ENCODE measurements at regions of chr10 and their contacts with region 1.

Region 1: GRCh38 chr10:43348511-43349312 is 22.7 kb upstream of the FXYD4 start:
- DNase-seq: peak; percentile 75 to 95
- ATAC-seq: peak; percentile 98 to 100 (median 100)
- H3K4me3 ChIP-seq: no peak overlapping the region
- H3K4me3 Mint-ChIP-seq: peak overlapping the region; percentile 8
- H3K27ac ChIP-seq: no peak overlapping the region
- H3K27ac Mint-ChIP-seq: no peak overlapping the region
- H3K4me1 ChIP-seq: peaks cover 15% of the 10 kb centered on the region
- H3K4me1 Mint-ChIP-seq: peaks cover 13% of the 10 kb centered on the region in 2 donors
- H3K27me3 ChIP-seq: peaks cover 13% of the 10 kb centered on the region
- H3K27me3 Mint-ChIP-seq: peaks cover 8 to 19% of the 10 kb centered on the region in 2 donors
- CTCF ChIP-seq: peak; percentile 91

Region 2: GRCh38 chr10:42744134-42744692 is 604.5 kb before region 1 on chr10:
- intact Hi-C with region 1: loop called (anchors 10 kb)
- DNase-seq: no peak
- ATAC-seq: no peak
- H3K4me3 ChIP-seq: no peak overlapping the region
- H3K4me3 Mint-ChIP-seq: no peak overlapping the region
- H3K27ac ChIP-seq: no peak overlapping the region
- H3K27ac Mint-ChIP-seq: no peak overlapping the region
- H3K4me1 ChIP-seq: no peaks in the 10 kb centered on the region
- H3K4me1 Mint-ChIP-seq: no peaks in the 10 kb centered on the region
- H3K27me3 ChIP-seq: no peaks in the 10 kb centered on the region
- H3K27me3 Mint-ChIP-seq: peaks cover 0 to 9% of the 10 kb centered on the region in 2 donors
- CTCF ChIP-seq: no peak

Region 3: GRCh38 chr10:42866115-42866995 is 482.4 kb before region 1 on chr10:
- intact Hi-C with region 1: loop called (anchors 2 kb)
- DNase-seq: peak; percentile 31 to 71
- ATAC-seq: peak; percentile 68 to 84 (median 75)
- H3K4me3 ChIP-seq: no peak overlapping the region
- H3K4me3 Mint-ChIP-seq: no peak overlapping the region
- H3K27ac ChIP-seq: no peak overlapping the region
- H3K27ac Mint-ChIP-seq: no peak overlapping the region
- H3K4me1 ChIP-seq: peaks cover 10% of the 10 kb centered on the region
- H3K4me1 Mint-ChIP-seq: no peaks in the 10 kb centered on the region
- H3K27me3 ChIP-seq: peaks cover 2% of the 10 kb centered on the region
- H3K27me3 Mint-ChIP-seq: peaks cover 27 to 47% of the 10 kb centered on the region in 2 donors
- CTCF ChIP-seq: peak; percentile 39

Region 4: DNA sequence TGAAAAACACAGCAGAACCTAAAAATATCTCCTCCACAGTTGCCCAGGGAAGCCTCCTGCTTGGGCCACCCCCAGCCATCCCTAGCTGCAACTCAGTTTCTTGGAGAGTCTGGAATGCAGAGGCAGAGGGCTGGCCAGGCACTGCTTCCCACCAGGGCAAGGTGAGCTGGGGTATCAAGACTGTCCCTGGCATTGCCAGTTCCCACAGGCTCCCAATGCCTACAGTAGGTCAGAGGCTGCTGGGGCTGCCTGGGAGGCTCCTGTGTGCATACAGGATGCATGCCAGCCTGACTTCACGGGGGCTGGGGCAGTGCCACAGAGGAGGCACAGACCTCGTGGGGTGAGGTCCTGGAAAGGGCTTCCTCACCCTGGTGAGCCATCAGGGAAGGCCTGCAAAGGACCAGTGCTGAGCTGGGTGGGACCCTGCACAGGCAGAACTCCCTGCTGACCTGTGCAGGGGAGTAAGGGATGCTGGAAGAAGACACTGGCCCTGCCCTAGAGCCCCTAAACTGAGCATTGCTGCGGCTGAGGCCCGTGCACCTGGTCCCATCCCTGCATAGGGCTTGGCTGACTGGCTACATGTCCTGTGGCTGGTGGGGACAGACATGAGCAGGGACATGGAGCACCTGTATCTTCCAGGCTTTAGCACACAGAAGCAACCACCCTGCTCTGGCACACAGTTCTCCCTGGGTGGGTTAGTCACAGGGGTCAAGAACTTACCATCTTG is 393.8 kb before region 1 on chr10:
- intact Hi-C with region 1: loop called (anchors 5 kb)
- DNase-seq: no peak
- ATAC-seq: no peak
- H3K4me3 ChIP-seq: no peak overlapping the region
- H3K4me3 Mint-ChIP-seq: no peak overlapping the region
- H3K27ac ChIP-seq: no peak overlapping the region
- H3K27ac Mint-ChIP-seq: no peak overlapping the region
- H3K4me1 ChIP-seq: no peaks in the 10 kb centered on the region
- H3K4me1 Mint-ChIP-seq: no peaks in the 10 kb centered on the region
- H3K27me3 ChIP-seq: no peaks in the 10 kb centered on the region
- H3K27me3 Mint-ChIP-seq: peaks cover 6 to 9% of the 10 kb centered on the region in 2 donors
- CTCF ChIP-seq: no peak

Region 5: DNA sequence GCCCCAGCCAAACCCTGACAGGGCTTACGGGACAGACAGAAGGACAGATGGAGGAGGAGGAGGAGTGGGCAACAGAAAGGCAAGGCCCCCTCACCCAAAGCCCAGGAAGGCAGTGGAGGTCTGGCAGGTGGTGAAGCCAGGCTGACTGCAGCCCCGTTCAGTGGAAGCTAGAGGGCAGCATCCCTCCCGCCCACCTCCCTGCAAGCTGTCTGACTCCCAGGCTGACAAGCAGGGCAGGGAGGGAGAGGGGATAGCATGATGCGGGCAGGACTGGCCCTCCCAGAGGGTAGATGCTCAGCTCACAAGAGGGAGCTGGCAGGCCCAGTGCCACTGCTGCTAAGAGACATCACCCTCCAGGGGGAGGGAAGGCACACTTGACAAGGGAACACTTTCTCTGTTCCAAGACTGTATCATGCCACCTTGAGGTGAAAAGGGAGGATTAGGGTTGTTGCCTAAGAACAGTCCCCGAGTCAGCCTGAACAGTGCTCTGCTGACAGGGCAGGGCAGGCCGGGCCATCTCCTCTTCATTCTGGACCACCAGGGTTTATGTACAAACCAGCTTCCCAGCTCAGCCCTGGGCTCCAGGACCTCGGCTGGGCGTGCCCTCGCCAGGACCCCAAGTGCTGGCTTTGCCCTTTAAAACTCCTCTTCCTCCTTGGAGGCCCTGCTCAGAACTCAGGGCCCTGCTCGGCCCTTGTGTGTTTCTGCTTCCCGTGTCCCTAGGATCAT is 143.6 kb before region 1 on chr10:
- intact Hi-C with region 1: loop called (anchors 10 kb)
- DNase-seq: peak; percentile 19 to 75
- ATAC-seq: peak; percentile 45 to 55 (median 54)
- H3K4me3 ChIP-seq: no peak overlapping the region
- H3K4me3 Mint-ChIP-seq: no peak overlapping the region
- H3K27ac ChIP-seq: no peak overlapping the region
- H3K27ac Mint-ChIP-seq: peak overlapping the region in 1 of 2 donors; percentile 66
- H3K4me1 ChIP-seq: peaks cover 43% of the 10 kb centered on the region
- H3K4me1 Mint-ChIP-seq: peaks cover 6 to 17% of the 10 kb centered on the region in 2 donors
- H3K27me3 ChIP-seq: no peaks in the 10 kb centered on the region
- H3K27me3 Mint-ChIP-seq: no peaks in the 10 kb centered on the region
- CTCF ChIP-seq: peak; percentile 78

Region 6: GRCh38 chr10:43273543-43273942 is 75.2 kb before region 1 on chr10:
- intact Hi-C with region 1: no loop called
- DNase-seq: no peak
- ATAC-seq: no peak
- H3K4me3 ChIP-seq: no peak overlapping the region
- H3K4me3 Mint-ChIP-seq: no peak overlapping the region
- H3K27ac ChIP-seq: no peak overlapping the region
- H3K27ac Mint-ChIP-seq: no peak overlapping the region
- H3K4me1 ChIP-seq: no peaks in the 10 kb centered on the region
- H3K4me1 Mint-ChIP-seq: no peaks in the 10 kb centered on the region
- H3K27me3 ChIP-seq: peaks cover 9% of the 10 kb centered on the region
- H3K27me3 Mint-ChIP-seq: peaks cover 38 to 63% of the 10 kb centered on the region in 2 donors
- CTCF ChIP-seq: no peak

Region 7: GRCh38 chr10:43292755-43293676 is 55.7 kb before region 1 on chr10:
- intact Hi-C with region 1: loop called (anchors 5 kb)
- DNase-seq: peak in 1 of 2 donors; percentile 75
- ATAC-seq: peak; percentile 66 to 83 (median 73)
- H3K4me3 ChIP-seq: no peak overlapping the region
- H3K4me3 Mint-ChIP-seq: no peak overlapping the region
- H3K27ac ChIP-seq: peak overlapping the region; percentile 51
- H3K27ac Mint-ChIP-seq: peak overlapping the region in 1 of 2 donors; percentile 14
- H3K4me1 ChIP-seq: peaks cover 33% of the 10 kb centered on the region
- H3K4me1 Mint-ChIP-seq: peaks cover 11 to 22% of the 10 kb centered on the region in 2 donors
- H3K27me3 ChIP-seq: no peaks in the 10 kb centered on the region
- H3K27me3 Mint-ChIP-seq: peaks cover 0 to 4% of the 10 kb centered on the region in 2 donors
- CTCF ChIP-seq: peak; percentile 54

Region 8: GRCh38 chr10:43461950-43462349 is 113.2 kb after region 1 on chr10:
- intact Hi-C with region 1: loop called (anchors 5 kb)
- DNase-seq: peak in 1 of 2 donors; percentile 91
- ATAC-seq: peak; percentile 83 to 91 (median 87)
- H3K4me3 ChIP-seq: no peak overlapping the region
- H3K4me3 Mint-ChIP-seq: no peak overlapping the region
- H3K27ac ChIP-seq: no peak overlapping the region
- H3K27ac Mint-ChIP-seq: peak overlapping the region in 1 of 2 donors; percentile 40
- H3K4me1 ChIP-seq: peaks cover 8% of the 10 kb centered on the region
- H3K4me1 Mint-ChIP-seq: peaks cover 7 to 13% of the 10 kb centered on the region in 2 donors
- H3K27me3 ChIP-seq: no peaks in the 10 kb centered on the region
- H3K27me3 Mint-ChIP-seq: no peaks in the 10 kb centered on the region
- CTCF ChIP-seq: peak; percentile 71

Region 9: GRCh38 chr10:43471935-43472720 is 123.4 kb after region 1 on chr10:
- intact Hi-C with region 1: no loop called
- DNase-seq: no peak
- ATAC-seq: no peak
- H3K4me3 ChIP-seq: no peak overlapping the region
- H3K4me3 Mint-ChIP-seq: no peak overlapping the region
- H3K27ac ChIP-seq: no peak overlapping the region
- H3K27ac Mint-ChIP-seq: no peak overlapping the region
- H3K4me1 ChIP-seq: no peaks in the 10 kb centered on the region
- H3K4me1 Mint-ChIP-seq: peaks cover 0 to 10% of the 10 kb centered on the region in 2 donors
- H3K27me3 ChIP-seq: no peaks in the 10 kb centered on the region
- H3K27me3 Mint-ChIP-seq: no peaks in the 10 kb centered on the region
- CTCF ChIP-seq: no peak

Measured in natural killer cell (primary cell).